ENCODE measurements at regions of chr1 and their contacts with region 1.

Region 1: GRCh38 chr1:6245086-6245868 is 1.3 kb downstream of the HES3 start:
- DNase-seq: peak; percentile 82 to 89
- ATAC-seq: peak; percentile 86 to 90 (median 87)
- H3K4me3 ChIP-seq: no peak overlapping the region
- H3K27ac ChIP-seq: no peak overlapping the region
- H3K4me1 ChIP-seq: peaks cover 5% of the 10 kb centered on the region
- H3K27me3 ChIP-seq: peaks cover 0 to 90% (median 26%) of the 10 kb centered on the region in 3 donors
- CTCF ChIP-seq: peak; percentile 80

Region 2: GRCh38 chr1:6052543-6053205 is 192.6 kb before region 1 on chr1:
- intact Hi-C with region 1: loop called (anchors 2 to 5 kb)
- DNase-seq: peak; percentile 49 to 68
- ATAC-seq: no peak
- H3K4me3 ChIP-seq: no peak overlapping the region
- H3K27ac ChIP-seq: no peak overlapping the region
- H3K4me1 ChIP-seq: no peaks in the 10 kb centered on the region
- H3K27me3 ChIP-seq: peaks cover 0 to 2% (median 0%) of the 10 kb centered on the region in 3 donors
- CTCF ChIP-seq: peak; percentile 37

Region 3: GRCh38 chr1:6171548-6172119 is 73.6 kb before region 1 on chr1:
- intact Hi-C with region 1: no loop called
- DNase-seq: no peak
- ATAC-seq: no peak
- H3K4me3 ChIP-seq: no peak overlapping the region
- H3K27ac ChIP-seq: no peak overlapping the region
- H3K4me1 ChIP-seq: no peaks in the 10 kb centered on the region
- H3K27me3 ChIP-seq: peaks cover 0 to 31% (median 19%) of the 10 kb centered on the region in 3 donors
- CTCF ChIP-seq: no peak

Region 4: GRCh38 chr1:6343506-6344405 is 98.5 kb after region 1 on chr1:
- intact Hi-C with region 1: loop called (anchors 2 kb)
- DNase-seq: peak; percentile 69 to 80
- ATAC-seq: peak; percentile 83 to 90 (median 88)
- H3K4me3 ChIP-seq: no peak overlapping the region
- H3K27ac ChIP-seq: no peak overlapping the region
- H3K4me1 ChIP-seq: no peaks in the 10 kb centered on the region
- H3K27me3 ChIP-seq: no peaks in the 10 kb centered on the region
- CTCF ChIP-seq: peak; percentile 90

Region 5: GRCh38 chr1:6401673-6402072 is 156.4 kb after region 1 on chr1:
- intact Hi-C with region 1: loop called (anchors 2 to 5 kb)
- DNase-seq: no peak
- ATAC-seq: no peak
- H3K4me3 ChIP-seq: no peak overlapping the region
- H3K27ac ChIP-seq: no peak overlapping the region
- H3K4me1 ChIP-seq: no peaks in the 10 kb centered on the region
- H3K27me3 ChIP-seq: peaks cover 0 to 1% (median 0%) of the 10 kb centered on the region in 3 donors
- CTCF ChIP-seq: no peak

Region 6: DNA sequence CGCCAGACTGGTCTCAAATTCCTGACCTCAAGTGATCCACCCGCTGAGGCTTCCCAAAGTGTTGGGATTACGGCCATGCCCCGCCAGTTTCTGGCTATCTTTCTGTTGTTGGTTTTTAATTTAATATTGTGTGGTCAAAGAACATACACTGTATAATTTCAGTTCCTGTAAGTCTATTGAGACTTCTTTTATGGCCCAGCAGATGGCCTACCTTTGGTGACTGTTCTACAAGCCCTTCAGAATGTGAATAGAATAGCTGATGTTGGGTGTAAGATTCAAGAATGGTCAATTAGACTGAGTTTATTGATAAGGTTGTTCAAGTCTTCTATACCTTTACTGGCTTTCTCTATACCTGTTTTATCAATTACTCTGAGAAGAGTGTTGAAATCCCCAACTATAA is 163.8 kb after region 1 on chr1:
- intact Hi-C with region 1: loop called (anchors 2 to 5 kb)
- DNase-seq: no peak
- ATAC-seq: no peak
- H3K4me3 ChIP-seq: no peak overlapping the region
- H3K27ac ChIP-seq: no peak overlapping the region
- H3K4me1 ChIP-seq: no peaks in the 10 kb centered on the region
- H3K27me3 ChIP-seq: peaks cover 0 to 20% (median 1%) of the 10 kb centered on the region in 3 donors
- CTCF ChIP-seq: no peak

Measured in psoas muscle (tissue), 8 donors.